GM10248 (cell line): ENCODE measurements at regions of chr11 and their contacts with region 1.

Region 1: GRCh38 chr11:122796128-122796717 is 42.1 kb upstream of the CRTAM start:
- DNase-seq: peak; percentile 68
- CTCF ChIP-seq: peak; percentile 86

Region 2: DNA sequence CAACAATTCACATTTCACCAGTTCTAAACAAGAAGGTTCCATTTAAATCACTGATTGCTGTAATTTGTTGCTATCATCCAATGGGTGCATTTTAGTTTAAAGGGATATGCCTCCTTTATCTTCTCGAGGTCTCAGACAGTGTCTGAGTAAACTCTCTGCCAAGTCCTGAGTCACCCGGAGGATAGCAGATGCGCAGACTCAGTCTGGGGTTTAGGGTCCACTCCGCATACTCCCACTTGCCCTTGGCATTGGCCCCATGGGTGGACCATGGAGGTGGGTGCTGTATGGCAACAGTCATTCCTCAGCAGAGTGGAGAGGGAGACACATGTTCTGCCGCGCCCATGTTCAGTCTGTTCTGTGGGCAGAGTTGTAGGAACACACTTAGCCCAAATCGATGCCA is 23.3 kb before region 1 on chr11:
- CTCF ChIA-PET with region 1: interaction called, 10 read pairs
- POLR2A ChIA-PET with region 1: no interaction called
- DNase-seq: no peak
- CTCF ChIP-seq: no peak

Region 3: DNA sequence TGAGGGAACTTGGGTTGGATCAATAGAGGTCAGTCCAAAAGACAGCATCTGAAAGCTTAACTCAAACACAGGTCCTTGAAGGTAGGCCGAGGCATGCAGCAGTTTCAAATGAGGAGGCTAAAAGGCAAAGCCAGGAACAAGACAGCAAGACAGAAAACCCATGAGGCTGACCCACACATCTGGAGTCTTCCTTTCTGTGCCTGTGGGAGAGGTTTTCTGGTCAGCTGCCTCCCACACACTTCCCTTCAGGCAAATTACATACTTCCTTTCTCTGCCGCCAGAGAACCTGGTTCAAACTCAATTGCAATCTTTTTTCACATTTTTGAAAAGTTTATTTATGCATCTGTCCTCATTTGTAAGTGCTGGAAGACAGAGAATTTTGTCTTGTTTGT is 12.3 kb after region 1 on chr11:
- CTCF ChIA-PET with region 1: interaction called, 70 read pairs
- POLR2A ChIA-PET with region 1: no interaction called
- DNase-seq: peak; percentile 58
- CTCF ChIP-seq: no peak

Region 4: DNA sequence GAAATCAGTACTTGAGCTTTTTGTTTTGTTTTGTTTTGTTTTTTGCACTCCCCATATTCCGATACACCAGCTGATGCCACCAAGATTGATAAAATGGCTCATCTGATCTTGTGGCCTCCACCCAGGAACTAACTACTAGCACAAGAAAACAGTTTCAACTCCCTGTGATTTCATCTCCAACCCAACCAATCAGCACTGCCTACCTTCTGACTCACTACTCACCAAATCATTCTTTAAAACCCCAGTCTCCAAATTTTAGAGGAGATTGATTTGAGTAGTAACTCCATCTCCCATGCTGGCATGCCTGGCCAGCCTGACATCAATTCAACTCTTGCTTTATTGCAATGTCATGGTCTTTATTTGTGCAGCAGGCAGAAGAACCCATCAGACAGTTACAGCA is 26.0 kb after region 1 on chr11:
- CTCF ChIA-PET with region 1: interaction called, 12 read pairs
- POLR2A ChIA-PET with region 1: no interaction called
- DNase-seq: no peak
- CTCF ChIP-seq: no peak

Region 5: GRCh38 chr11:122843281-122844141 is 47.3 kb after region 1 on chr11:
- CTCF ChIA-PET with region 1: interaction called, 31 read pairs
- POLR2A ChIA-PET with region 1: no interaction called
- DNase-seq: peak; percentile 26
- CTCF ChIP-seq: no peak